ENCODE measurements at regions of chr1 and their contacts with region 1.

Region 1: GRCh38 chr1:46442317-46443161 is 47.1 kb upstream of the DMBX1 start:
- DNase-seq: peak; percentile 83 to 100
- H3K4me3 ChIP-seq: peak overlapping the region; percentile 38 to 68 (median 58); a peak in 7 of 8 replicates
- H3K27ac ChIP-seq: peak overlapping the region; percentile 51; the same call in 1 of the 2 replicates
- H3K4me1 ChIP-seq: peaks cover 1 to 17% (median 6%) of the 10 kb centered on the region in 4 experiments; a peak in 6 of 7 replicates
- H3K27me3 ChIP-seq: peaks cover 7 to 14% (median 13%) of the 10 kb centered on the region in 4 experiments
- CTCF ChIP-seq: peak; percentile 81 to 95 (median 89)
- EP300 ChIP-seq: no peak
- POLR2A ChIP-seq: no peak
- RAD21 ChIP-seq: peak; percentile 71 to 80

Region 2: DNA sequence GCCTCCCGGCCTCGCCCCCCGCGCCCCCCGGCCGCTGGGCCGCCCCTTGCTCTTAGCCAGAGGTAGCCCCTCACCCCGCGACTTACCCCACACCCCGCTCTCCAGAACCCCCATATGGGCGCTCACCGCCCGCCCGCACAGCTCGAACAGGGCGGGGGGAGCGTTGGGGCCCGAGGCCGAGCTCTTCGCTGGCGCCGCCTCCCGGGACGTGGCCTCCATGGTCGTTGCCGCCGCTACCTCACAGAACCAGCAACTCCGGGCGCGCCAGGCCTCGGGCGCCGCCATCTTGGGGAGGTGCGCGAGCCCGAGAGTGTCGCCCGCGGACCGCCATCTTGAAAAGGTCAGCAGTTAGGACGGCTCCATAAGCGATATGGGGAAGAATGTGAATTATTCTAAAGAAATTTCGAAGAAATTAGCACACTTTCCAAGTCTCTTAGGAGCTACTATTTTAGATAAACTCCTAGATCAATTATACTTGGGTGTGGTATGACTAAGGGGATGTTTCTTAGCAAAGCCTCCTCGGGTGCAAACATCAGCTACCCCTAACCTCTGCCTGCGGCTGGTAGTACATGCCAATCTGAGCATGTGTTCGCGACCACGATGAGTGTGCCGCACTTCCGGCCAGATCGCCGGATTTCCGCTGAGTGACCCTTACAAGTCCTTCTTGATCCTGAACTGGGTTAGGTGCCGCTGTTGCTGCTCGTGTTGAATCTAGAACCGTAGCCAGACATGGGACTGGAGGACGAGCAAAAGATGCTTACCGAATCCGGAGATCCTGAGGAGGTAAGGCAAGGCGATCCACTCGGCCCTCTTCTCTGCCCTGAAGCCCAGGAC is 139.3 kb before region 1 on chr1 and contains the starts of genes LRRC41 and UQCRH:
- CTCF ChIA-PET with region 1: no interaction called
- POLR2A ChIA-PET with region 1: no interaction called
- DNase-seq: peak; percentile 93 to 97
- H3K4me3 ChIP-seq: peak within 1 kb of the TSS; percentile 84 to 97 (median 90)
- H3K27ac ChIP-seq: peak within 1 kb of the TSS; percentile 92
- H3K4me1 ChIP-seq: peaks cover 5 to 17% (median 14%) of the 10 kb centered on the region in 4 experiments
- H3K27me3 ChIP-seq: no peaks in the 10 kb centered on the region
- CTCF ChIP-seq: peak in 2 of 3 experiments; percentile 3 to 9; a peak in 2 of 4 replicates
- EP300 ChIP-seq: peak in 1 of 2 experiments; percentile 99; a peak in 2 of 3 replicates
- POLR2A ChIP-seq: peak; percentile 62 to 94
- RAD21 ChIP-seq: no peak
- total RNA-seq, gene LRRC41: 36.8 and 37.2 TPM in 2 replicates
- total RNA-seq, gene UQCRH: 621 and 626 TPM in 2 replicates

Region 3: GRCh38 chr1:46425726-46426125 is 16.8 kb before region 1 on chr1:
- CTCF ChIA-PET with region 1: interaction called, 513 read pairs
- POLR2A ChIA-PET with region 1: interaction called, 80 read pairs
- DNase-seq: no peak
- H3K4me3 ChIP-seq: no peak overlapping the region
- H3K27ac ChIP-seq: no peak overlapping the region
- H3K4me1 ChIP-seq: no peaks in the 10 kb centered on the region
- H3K27me3 ChIP-seq: no peaks in the 10 kb centered on the region; a peak in 1 of 7 replicates
- CTCF ChIP-seq: no peak
- EP300 ChIP-seq: no peak
- POLR2A ChIP-seq: no peak
- RAD21 ChIP-seq: no peak

Region 4: GRCh38 chr1:46456411-46456963 is 13.9 kb after region 1 on chr1:
- CTCF ChIA-PET with region 1: interaction called, 40 read pairs
- POLR2A ChIA-PET with region 1: interaction called, 7 read pairs
- DNase-seq: no peak
- H3K4me3 ChIP-seq: no peak overlapping the region
- H3K27ac ChIP-seq: no peak overlapping the region
- H3K4me1 ChIP-seq: peaks cover 0 to 15% (median 8%) of the 10 kb centered on the region in 4 experiments; a peak in 6 of 7 replicates
- H3K27me3 ChIP-seq: peaks cover 21 to 59% (median 42%) of the 10 kb centered on the region in 4 experiments
- CTCF ChIP-seq: no peak
- EP300 ChIP-seq: no peak
- POLR2A ChIP-seq: no peak
- RAD21 ChIP-seq: no peak

Region 5: GRCh38 chr1:46477153-46477929 is 34.8 kb after region 1 on chr1:
- CTCF ChIA-PET with region 1: interaction called, 147 read pairs
- POLR2A ChIA-PET with region 1: interaction called, 3 read pairs
- DNase-seq: peak; percentile 51 to 92
- H3K4me3 ChIP-seq: no peak overlapping the region
- H3K27ac ChIP-seq: no peak overlapping the region
- H3K4me1 ChIP-seq: peaks cover 3 to 14% (median 10%) of the 10 kb centered on the region in 4 experiments
- H3K27me3 ChIP-seq: peaks cover 0 to 53% (median 43%) of the 10 kb centered on the region in 4 experiments; a peak in 6 of 7 replicates
- CTCF ChIP-seq: peak; percentile 84 to 88 (median 88)
- EP300 ChIP-seq: no peak
- POLR2A ChIP-seq: no peak
- RAD21 ChIP-seq: peak; percentile 83 to 87

Region 6: DNA sequence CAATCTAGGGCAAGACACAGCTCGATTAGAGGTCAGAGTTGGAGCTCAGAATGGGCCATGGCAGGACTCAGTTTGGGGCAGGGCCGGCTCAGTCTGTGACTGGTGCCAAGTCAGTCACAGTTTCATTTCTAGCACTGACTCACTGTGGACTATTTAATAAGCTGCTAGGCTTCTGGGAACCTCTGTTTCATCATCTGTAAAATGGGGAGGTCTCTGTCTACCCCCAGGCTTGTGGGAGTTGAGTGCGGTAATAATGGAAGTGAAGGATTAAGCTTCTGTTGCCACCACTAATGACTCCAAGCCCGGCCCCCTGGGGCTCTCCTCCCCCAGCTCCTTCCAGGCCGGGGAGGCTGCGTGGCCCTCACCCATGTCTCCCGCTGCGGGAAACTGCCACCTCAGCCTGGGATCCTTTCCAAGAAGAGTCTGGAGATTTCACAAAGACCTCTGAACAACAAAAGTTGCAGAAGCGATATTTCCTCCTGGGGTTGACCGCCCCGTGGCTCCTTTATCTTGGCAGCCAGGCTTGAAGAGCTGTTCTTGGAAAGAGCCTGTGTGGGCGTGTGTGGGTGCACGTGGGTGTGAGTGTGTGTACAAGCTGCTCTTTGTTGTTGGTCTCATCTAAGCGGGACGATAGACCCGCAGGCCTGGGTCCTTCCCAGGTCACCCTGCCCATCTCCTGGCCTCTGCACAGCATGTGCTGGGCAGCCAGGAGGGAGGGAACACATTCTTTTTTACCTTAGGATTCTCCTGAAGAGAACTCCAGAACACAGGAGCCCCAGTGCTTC is 79.8 kb after region 1 on chr1:
- CTCF ChIA-PET with region 1: interaction called, 497 read pairs
- POLR2A ChIA-PET with region 1: interaction called, 20 read pairs
- DNase-seq: peak in 1 of 2 experiments; percentile 45
- H3K4me3 ChIP-seq: no peak overlapping the region
- H3K27ac ChIP-seq: no peak overlapping the region
- H3K4me1 ChIP-seq: peaks cover 24 to 53% (median 34%) of the 10 kb centered on the region in 4 experiments
- H3K27me3 ChIP-seq: peaks cover 9 to 47% (median 42%) of the 10 kb centered on the region in 4 experiments
- CTCF ChIP-seq: no peak
- EP300 ChIP-seq: no peak
- POLR2A ChIP-seq: no peak
- RAD21 ChIP-seq: no peak

Region 7: GRCh38 chr1:46547481-46548383 is 105.2 kb after region 1 on chr1:
- CTCF ChIA-PET with region 1: interaction called, 160 read pairs
- POLR2A ChIA-PET with region 1: interaction called, 3 read pairs
- DNase-seq: no peak
- H3K4me3 ChIP-seq: no peak overlapping the region
- H3K27ac ChIP-seq: no peak overlapping the region
- H3K4me1 ChIP-seq: peaks cover 0 to 30% (median 19%) of the 10 kb centered on the region in 4 experiments; a peak in 6 of 7 replicates
- H3K27me3 ChIP-seq: peaks cover 27 to 44% (median 41%) of the 10 kb centered on the region in 4 experiments
- CTCF ChIP-seq: peak in 2 of 3 experiments; percentile 65 to 66; a peak in 3 of 4 replicates
- EP300 ChIP-seq: no peak
- POLR2A ChIP-seq: no peak
- RAD21 ChIP-seq: peak; percentile 60 to 70